WTC11 (cell line): ENCODE measurements at regions of chr20 and their contacts with region 1.

Region 1: DNA sequence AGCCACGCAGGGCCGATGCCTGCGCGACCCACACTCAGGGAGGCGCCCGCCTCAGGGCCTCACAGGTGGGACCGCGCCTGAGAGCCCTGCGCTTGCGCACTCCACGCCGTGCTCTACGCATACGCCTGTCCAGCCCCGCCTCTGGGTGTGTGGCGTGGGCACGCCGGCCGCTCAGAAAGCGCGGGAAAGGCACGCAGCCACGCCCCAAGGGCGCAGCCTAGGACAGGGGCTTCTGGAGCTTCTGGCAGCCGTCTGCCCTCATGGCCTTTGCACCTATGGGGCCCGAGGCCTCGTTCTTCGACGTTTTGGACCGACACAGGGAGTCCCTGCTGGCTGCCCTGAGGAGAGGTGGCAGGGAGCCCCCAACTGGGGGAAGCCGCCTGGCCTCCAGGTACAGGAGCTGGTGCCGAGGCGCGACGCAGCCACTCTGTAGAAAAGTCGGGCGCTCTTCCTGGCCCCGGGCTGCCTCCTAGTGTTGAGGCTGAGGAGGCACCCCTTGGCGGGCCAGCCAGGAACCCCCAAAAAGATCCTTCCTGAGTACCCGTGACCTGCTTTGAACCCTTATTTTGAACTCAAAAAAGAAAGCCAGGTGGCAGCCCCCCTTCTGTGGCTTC is at the start of gene SPO11:
- DNase-seq: peak; percentile 76
- ATAC-seq: peak; percentile 88
- H3K4me3 Mint-ChIP-seq: no peak within 1 kb of the TSS
- H3K27ac Mint-ChIP-seq: no peak within 1 kb of the TSS
- H3K4me1 Mint-ChIP-seq: peaks cover 10% of the 10 kb centered on the region
- H3K27me3 Mint-ChIP-seq: no peaks in the 10 kb centered on the region
- CTCF ChIP-seq: peak; percentile 58
- total RNA-seq, gene SPO11: not detected in 3 replicates

Region 2: DNA sequence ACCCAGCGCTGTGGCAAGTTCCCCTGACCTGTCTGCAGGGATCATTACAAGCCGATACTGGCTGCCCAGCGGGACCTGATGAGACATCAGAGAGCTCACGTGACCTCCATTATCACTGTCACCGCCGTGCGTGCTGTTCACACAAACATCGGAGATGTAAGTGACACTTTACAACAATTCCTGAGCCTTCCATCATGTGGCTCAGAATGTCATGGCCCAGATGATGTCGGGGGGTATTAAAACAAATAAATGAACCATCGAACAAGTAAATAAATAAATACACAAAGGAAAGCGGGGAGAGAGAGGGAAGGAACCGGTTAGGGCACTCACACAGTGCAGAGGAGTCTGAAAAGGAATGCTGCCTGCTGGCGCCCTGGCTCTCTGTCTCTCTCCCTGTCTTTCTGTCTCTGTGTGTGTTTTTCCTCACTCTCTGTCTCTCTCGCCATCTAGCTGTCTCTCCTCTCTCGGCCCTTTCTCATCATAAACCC is 258.4 kb before region 1 on chr20:
- CTCF ChIA-PET with region 1: interaction called, 15 read pairs
- POLR2A ChIA-PET with region 1: no interaction called
- DNase-seq: peak; percentile 57
- ATAC-seq: peak; percentile 83
- H3K4me3 Mint-ChIP-seq: peak overlapping the region; percentile 77
- H3K27ac Mint-ChIP-seq: peak overlapping the region; percentile 92
- H3K4me1 Mint-ChIP-seq: peaks cover 45% of the 10 kb centered on the region
- H3K27me3 Mint-ChIP-seq: peaks cover 55% of the 10 kb centered on the region
- CTCF ChIP-seq: no peak

Region 3: DNA sequence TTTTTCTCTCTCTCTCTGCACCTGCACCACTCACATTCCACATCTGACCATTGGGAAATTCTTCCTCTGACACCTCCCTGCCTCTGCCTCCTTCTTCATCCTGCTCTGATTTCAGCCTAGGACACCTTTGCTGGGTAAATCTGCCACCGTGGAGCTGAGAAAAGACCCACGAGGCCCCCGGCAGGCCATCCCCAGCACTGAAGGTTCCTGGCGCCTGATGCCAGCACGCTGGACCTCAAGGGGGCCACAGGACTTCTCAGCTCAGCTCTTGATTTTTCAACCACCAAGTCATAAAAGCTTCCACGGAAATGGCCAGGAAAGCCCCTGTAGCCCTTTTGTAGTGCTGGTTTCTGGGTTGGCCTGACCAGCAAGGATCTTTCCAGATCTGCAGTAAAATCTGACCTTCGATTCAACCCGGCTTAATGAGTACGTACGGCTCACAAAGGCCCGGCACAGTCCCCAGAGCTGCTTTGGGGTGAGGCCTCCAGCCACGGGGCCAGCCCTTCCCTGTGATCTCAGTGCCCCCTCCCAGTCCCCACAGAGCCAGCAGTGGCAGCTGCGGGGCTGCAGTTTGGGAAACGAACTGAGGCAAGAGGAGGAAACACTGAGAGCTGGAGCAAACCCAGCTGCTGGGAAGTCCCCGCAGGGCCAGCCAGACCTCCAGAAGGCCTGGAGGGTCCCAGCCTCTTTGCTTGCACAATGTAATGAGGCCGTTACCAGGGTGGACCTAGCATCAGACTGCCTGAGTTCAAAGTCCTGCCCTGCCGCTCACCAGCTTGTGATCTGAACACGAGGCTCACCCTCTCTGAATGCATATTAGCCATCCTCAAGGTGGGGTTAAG is 220.8 kb before region 1 on chr20:
- CTCF ChIA-PET with region 1: interaction called, 18 read pairs
- POLR2A ChIA-PET with region 1: no interaction called
- DNase-seq: no peak
- ATAC-seq: peak; percentile 85
- H3K4me3 Mint-ChIP-seq: no peak overlapping the region
- H3K27ac Mint-ChIP-seq: 0 out of 2 replicates have a peak overlapping the region, but pooled peaks have one; percentile 45
- H3K4me1 Mint-ChIP-seq: no peaks in the 10 kb centered on the region
- H3K27me3 Mint-ChIP-seq: no peaks in the 10 kb centered on the region
- CTCF ChIP-seq: no peak

Region 4: DNA sequence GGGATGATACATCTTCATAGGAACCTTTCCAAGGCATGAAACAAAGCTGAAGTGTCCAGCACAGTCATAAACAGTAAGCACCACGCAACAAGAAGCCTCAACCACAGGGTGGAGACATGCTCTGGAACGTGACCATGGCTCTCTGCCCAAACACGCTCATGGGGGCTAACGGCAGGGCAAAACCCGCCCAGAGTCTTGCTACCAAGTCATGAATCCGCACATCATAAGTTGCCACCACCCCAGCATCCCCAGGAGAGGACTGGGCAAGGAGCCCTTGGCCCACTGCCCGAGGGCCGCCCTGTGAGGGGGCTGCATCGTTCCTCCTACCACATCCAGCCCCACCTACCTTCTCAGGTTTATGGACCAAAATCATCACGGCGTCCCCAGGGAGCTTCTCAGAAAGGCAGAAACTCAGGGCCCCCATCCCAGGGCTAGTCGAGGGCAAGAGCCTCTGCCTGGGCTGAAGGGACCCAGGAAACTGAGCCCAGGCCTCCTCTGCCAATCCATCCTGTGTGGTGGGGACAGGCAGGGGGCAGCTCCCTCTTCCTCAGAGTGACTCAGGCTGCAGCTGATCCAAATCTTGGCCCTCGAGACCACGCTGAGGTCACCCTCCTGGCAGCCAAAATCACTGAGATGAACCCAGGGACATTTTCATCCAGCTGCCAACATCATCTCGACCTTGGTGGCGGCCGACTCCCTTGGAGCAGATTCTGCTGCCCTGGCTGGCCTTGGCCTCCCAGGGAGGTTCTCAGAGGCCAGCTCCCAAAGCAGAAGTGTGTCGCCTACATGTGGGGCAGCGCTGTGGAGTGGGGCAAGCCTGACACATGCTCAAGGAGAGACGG is 105.8 kb before region 1 on chr20:
- CTCF ChIA-PET with region 1: interaction called, 25 read pairs
- POLR2A ChIA-PET with region 1: no interaction called
- DNase-seq: no peak
- ATAC-seq: no peak
- H3K4me3 Mint-ChIP-seq: no peak overlapping the region
- H3K27ac Mint-ChIP-seq: peak overlapping the region; percentile 78; the same call in 1 of the 2 replicates
- H3K4me1 Mint-ChIP-seq: no peaks in the 10 kb centered on the region
- H3K27me3 Mint-ChIP-seq: no peaks in the 10 kb centered on the region
- CTCF ChIP-seq: no peak

Region 5: GRCh38 chr20:57290749-57291402 is 38.8 kb before region 1 on chr20:
- CTCF ChIA-PET with region 1: interaction called, 11 read pairs
- POLR2A ChIA-PET with region 1: no interaction called
- DNase-seq: peak; percentile 66
- ATAC-seq: peak; percentile 94
- H3K4me3 Mint-ChIP-seq: no peak overlapping the region
- H3K27ac Mint-ChIP-seq: no peak overlapping the region
- H3K4me1 Mint-ChIP-seq: peaks cover 47% of the 10 kb centered on the region
- H3K27me3 Mint-ChIP-seq: peaks cover 4% of the 10 kb centered on the region
- CTCF ChIP-seq: 0 out of 2 replicates have a peak, but pooled peaks have one; percentile 30

Region 6: GRCh38 chr20:57361212-57361915 is 31.6 kb after region 1 on chr20:
- CTCF ChIA-PET with region 1: no interaction called
- POLR2A ChIA-PET with region 1: no interaction called
- DNase-seq: no peak
- ATAC-seq: no peak
- H3K4me3 Mint-ChIP-seq: no peak overlapping the region
- H3K27ac Mint-ChIP-seq: no peak overlapping the region
- H3K4me1 Mint-ChIP-seq: no peaks in the 10 kb centered on the region
- H3K27me3 Mint-ChIP-seq: no peaks in the 10 kb centered on the region
- CTCF ChIP-seq: no peak